GM18951 (cell line): ENCODE measurements at regions of chr10 and their contacts with region 1.

Region 1: GRCh38 chr10:4663162-4663904 is 162.7 kb upstream of the AKR1E2 start:
- POLR2A ChIP-seq: no peak

Region 2: GRCh38 chr10:3239066-3239919 is 1424.0 kb before region 1 on chr10:
- in situ Hi-C with region 1: loop called (anchors 25 kb)
- POLR2A ChIP-seq: no peak